ENCODE measurements at regions of chr21 and their contacts with region 1.

Region 1: DNA sequence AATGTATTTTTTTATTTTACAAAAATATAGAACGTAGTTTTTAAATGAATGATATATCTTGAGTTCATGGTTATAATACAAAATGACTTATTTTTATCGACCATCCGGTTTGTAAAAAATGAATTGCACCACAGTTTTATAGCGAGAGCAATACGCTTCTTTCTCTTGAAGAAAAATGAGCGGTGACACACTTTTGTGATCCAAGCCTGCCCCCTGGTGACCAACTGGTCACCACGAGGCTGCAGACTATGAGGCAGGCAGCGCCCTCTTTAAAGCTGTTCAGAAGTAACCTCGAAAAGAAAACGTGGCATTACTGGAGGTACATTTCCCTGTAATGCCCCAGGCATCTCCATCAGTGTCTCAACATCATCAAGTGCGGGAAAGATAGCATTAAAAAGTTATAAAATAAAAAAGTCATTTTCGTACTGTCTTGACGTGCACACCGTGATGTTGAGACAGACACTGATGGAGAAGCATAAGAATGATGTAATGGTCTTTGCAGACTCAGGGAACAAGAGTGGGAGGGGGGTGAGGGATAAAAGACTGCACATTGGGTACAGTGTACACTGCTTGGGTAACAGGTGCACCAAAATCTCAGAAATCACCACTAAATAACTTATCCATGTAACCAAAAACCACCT is 734.2 kb upstream of the ADAMTS5 start:
- DNase-seq: peak; percentile 83 to 92 (median 90)
- H3K4me3 ChIP-seq: no peak overlapping the region
- H3K27ac ChIP-seq: no peak overlapping the region
- H3K4me1 ChIP-seq: no peaks in the 10 kb centered on the region
- H3K27me3 ChIP-seq: no peaks in the 10 kb centered on the region
- CTCF ChIP-seq: peak; percentile 26 to 87 (median 82)
- EP300 ChIP-seq: no peak
- POLR2A ChIP-seq: no peak

Region 2: DNA sequence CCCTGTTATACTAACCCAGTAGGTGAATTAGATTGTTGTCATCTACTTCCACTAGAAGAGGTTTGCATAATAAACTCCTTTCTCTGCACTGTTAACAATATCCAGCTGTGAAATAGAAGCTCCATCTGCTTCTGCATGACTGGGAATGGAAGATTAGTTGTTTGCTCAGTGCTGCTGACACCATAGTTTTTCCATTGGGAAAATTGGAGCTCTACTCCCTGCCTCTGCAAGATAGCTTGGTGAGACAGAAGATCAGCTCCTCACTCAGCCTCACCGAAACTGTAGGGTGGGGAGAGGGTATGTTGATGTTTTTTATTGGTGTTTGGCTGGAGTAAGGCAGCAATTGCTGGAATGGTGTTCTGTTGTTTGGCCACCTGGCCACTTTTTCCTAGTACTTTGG is 402.6 kb before region 1 on chr21:
- intact Hi-C with region 1: no loop called
- DNase-seq: peak in 2 of 5 donors; percentile 21 to 23
- H3K4me3 ChIP-seq: no peak overlapping the region
- H3K27ac ChIP-seq: peak overlapping the region in 1 of 2 donors; percentile 28
- H3K4me1 ChIP-seq: peaks cover 4% of the 10 kb centered on the region
- H3K27me3 ChIP-seq: no peaks in the 10 kb centered on the region
- CTCF ChIP-seq: no peak
- EP300 ChIP-seq: no peak
- POLR2A ChIP-seq: no peak

Region 3: DNA sequence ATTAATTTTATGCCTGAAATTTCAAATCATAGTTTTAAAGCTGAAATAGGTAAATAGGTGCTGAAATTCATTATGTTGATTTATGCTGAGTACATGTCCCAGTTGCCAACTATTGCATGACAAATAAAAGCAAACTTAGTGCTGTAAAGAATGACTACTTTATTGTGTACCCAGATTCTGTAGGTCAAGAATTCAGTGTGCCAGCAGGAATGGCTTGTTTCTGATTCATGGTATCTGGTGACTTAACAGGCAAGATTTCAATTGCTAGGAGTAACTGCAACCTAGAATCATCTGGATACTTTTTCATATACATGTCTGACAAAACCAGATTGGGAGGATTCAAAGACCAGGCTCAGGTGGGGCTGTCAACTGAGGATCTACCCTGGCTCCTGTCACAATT is 55.8 kb before region 1 on chr21:
- intact Hi-C with region 1: no loop called
- DNase-seq: no peak
- H3K4me3 ChIP-seq: no peak overlapping the region
- H3K27ac ChIP-seq: no peak overlapping the region
- H3K4me1 ChIP-seq: no peaks in the 10 kb centered on the region
- H3K27me3 ChIP-seq: no peaks in the 10 kb centered on the region
- CTCF ChIP-seq: no peak
- EP300 ChIP-seq: no peak
- POLR2A ChIP-seq: no peak

Region 4: DNA sequence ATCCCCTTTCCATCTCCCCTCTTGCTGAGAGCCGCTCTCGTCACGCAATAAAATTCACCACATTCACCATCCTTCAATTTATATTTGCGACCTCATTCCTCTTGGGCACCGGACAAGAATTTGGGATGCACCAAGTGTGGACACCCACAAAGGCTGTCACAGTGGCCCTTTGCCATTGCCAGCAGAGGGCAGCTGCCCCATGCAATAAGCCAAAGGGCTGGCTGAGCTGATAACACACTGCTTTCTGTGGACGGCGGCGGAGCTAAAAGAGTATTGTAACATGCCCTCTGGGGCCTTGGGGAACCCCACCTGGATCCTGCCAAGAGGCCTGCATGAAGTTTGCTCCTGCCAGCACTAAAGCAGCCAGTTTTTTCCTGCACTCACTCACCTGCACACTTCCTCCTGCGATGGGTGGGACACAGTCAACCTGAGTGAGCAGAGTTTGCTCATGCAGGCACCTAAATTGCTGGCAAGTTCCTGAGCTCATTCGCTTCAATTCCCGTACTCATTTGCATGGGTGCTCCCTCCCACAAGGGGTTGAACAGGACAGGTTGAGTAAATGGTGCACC is 58.1 kb after region 1 on chr21:
- intact Hi-C with region 1: no loop called
- DNase-seq: no peak
- H3K4me3 ChIP-seq: no peak overlapping the region
- H3K27ac ChIP-seq: no peak overlapping the region
- H3K4me1 ChIP-seq: no peaks in the 10 kb centered on the region
- H3K27me3 ChIP-seq: no peaks in the 10 kb centered on the region
- CTCF ChIP-seq: no peak
- EP300 ChIP-seq: no peak
- POLR2A ChIP-seq: no peak

Region 5: GRCh38 chr21:28069450-28069923 is 368.4 kb after region 1 on chr21:
- intact Hi-C with region 1: no loop called
- DNase-seq: no peak
- H3K4me3 ChIP-seq: no peak overlapping the region
- H3K27ac ChIP-seq: no peak overlapping the region
- H3K4me1 ChIP-seq: peaks cover 5% of the 10 kb centered on the region
- H3K27me3 ChIP-seq: no peaks in the 10 kb centered on the region
- CTCF ChIP-seq: no peak
- EP300 ChIP-seq: no peak
- POLR2A ChIP-seq: no peak

Region 6: DNA sequence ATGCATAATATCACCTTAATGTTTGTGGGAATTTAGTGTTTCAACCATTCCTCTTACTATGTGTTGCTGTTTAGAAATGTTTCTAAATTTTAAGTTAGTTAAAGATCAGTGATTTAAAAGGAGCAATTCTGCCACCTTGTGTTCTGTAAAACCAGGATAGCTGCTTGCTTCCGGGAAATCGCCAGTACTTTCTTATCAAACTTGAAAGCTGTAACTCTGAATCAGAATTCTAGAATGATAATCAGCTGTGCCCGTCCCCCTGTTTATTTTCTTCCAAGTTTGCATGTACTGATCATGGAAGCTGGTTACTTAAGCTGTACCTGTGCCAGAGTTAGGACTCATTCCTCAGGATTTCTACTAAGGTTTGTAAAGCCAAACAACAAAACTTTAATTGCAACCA is 635.2 kb after region 1 on chr21:
- intact Hi-C with region 1: loop called in 2 of 4 experiments (anchors 5 to 10 kb)
- DNase-seq: peak in 2 of 5 donors; percentile 15 to 39
- H3K4me3 ChIP-seq: no peak overlapping the region
- H3K27ac ChIP-seq: peak overlapping the region in 1 of 2 donors; percentile 12
- H3K4me1 ChIP-seq: peaks cover 3% of the 10 kb centered on the region
- H3K27me3 ChIP-seq: no peaks in the 10 kb centered on the region
- CTCF ChIP-seq: peak; percentile 15 to 56 (median 56)
- EP300 ChIP-seq: no peak
- POLR2A ChIP-seq: no peak

Measured in ovary (tissue), 10 donors.